ENCODE measurements at regions of chr6 and their contacts with region 1.

Region 1: DNA sequence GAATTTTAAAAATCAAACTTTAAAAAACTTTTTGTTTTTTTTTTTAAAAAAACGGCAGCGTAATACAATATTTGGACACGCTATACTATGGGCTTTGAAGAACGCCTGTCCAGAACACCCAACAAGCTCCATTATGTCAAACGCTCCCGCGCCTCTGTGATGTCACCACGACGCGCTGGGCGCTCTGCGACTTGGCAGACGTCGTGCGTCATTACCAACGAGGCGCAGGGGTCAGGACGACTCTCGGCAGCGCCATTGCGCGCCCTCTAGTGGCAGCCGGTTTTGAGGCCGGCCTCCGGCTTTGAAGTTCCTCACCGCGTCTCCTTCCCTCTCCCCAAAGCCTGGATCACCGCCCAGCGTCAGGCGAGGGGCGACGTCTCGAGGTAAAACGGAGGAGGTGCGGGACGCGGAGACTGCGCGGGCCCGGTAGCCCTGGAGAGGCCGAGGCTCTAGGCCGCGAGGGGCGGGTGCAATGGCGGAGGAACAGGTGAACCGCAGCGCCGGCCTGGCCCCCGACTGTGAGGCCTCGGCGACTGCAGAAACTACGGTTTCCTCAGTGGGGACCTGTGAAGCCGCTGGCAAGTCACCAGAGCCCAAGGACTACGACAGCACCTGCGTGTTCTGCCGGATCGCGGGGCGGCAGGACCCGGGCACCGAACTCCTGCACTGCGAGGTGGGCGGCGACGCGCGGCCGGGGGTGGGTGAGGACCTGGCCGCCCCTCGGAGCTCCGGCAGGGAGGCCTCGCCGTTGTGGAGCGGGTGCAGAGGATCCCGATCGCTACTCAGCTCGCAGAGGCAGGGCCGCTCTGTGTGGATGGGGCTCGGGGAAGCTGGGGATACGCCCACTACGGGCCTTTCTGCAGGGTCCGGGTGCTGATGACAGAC is at the start of gene HINT3:
- H3K4me3 Mint-ChIP-seq: no peak within 1 kb of the TSS
- H3K27ac Mint-ChIP-seq: no peak within 1 kb of the TSS
- H3K4me1 Mint-ChIP-seq: peaks cover 2% of the 10 kb centered on the region
- H3K27me3 Mint-ChIP-seq: no peaks in the 10 kb centered on the region

Region 2: DNA sequence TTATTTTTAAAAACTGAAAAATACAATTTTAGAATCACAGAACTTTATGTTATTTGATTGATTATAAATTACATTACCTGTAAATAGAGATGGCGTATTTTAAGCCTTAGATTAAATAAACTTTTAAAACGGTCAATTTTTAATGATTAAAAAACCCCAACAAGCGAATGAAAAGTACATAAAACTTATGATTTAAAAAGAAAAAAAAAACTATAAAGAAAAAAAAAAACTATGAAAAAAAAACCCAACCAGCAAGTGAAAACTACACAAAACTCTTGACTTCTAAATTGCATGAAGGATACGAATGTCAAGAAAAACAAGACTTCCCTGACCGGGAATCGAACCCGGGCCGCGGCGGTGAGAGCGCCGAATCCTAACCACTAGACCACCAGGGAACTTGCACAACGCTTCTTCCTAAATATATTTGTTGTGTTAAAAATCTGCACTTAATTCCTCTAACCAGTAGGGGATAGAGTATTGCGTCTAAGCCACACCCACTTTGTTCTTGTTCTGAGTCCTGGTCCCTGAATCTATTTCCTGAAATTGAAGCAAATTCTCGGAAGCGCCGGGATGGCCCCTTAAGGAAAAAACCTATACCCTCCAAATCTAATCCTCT is 176.7 kb before region 1 on chr6:
- intact Hi-C with region 1: loop called (anchors 2 kb)
- H3K4me3 Mint-ChIP-seq: no peak overlapping the region
- H3K27ac Mint-ChIP-seq: no peak overlapping the region
- H3K4me1 Mint-ChIP-seq: no peaks in the 10 kb centered on the region
- H3K27me3 Mint-ChIP-seq: peaks cover 18% of the 10 kb centered on the region

Region 3: GRCh38 chr6:125923987-125924568 is 32.7 kb before region 1 on chr6:
- intact Hi-C with region 1: loop called (anchors 5 kb)
- H3K4me3 Mint-ChIP-seq: no peak overlapping the region
- H3K27ac Mint-ChIP-seq: no peak overlapping the region
- H3K4me1 Mint-ChIP-seq: peaks cover 27% of the 10 kb centered on the region
- H3K27me3 Mint-ChIP-seq: no peaks in the 10 kb centered on the region